T-cell (primary cell): ENCODE measurements at regions of chr6 and their contacts with region 1.

Region 1: GRCh38 chr6:116399287-116399686 is 28.5 kb downstream of the DSE start:
- DNase-seq: no peak
- ATAC-seq: no peak
- H3K4me3 ChIP-seq: no peak overlapping the region
- H3K4me3 Mint-ChIP-seq: no peak overlapping the region
- H3K27ac ChIP-seq: no peak overlapping the region
- H3K27ac Mint-ChIP-seq: no peak overlapping the region
- H3K4me1 ChIP-seq: no peaks in the 10 kb centered on the region
- H3K4me1 Mint-ChIP-seq: peaks cover 0 to 6% (median 2%) of the 10 kb centered on the region in 3 donors
- H3K27me3 ChIP-seq: no peaks in the 10 kb centered on the region
- H3K27me3 Mint-ChIP-seq: no peaks in the 10 kb centered on the region

Region 2: DNA sequence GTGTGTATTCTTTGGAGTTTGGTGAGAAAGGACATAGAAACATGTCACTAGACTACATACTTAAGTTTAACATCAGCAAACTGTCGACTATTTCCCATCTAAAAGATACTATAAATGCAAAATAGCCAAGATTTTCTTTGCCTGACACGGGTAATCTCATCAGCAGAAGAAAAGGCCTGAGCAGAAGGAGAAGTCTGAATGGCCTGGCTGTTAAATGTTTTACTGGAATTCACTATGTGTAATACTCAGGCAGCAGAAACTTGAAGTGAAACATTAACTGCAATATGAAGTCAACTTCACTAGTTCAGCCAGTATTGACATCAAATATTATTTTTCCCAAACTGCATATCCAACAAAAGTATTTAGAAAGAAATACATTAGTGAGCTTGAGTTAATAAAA is 35.0 kb before region 1 on chr6:
- CTCF ChIA-PET with region 1: no interaction called
- POLR2A ChIA-PET with region 1: interaction called in 1 of 2 experiments, 12 read pairs
- DNase-seq: no peak
- ATAC-seq: no peak
- H3K4me3 ChIP-seq: no peak overlapping the region
- H3K4me3 Mint-ChIP-seq: no peak overlapping the region
- H3K27ac ChIP-seq: no peak overlapping the region
- H3K27ac Mint-ChIP-seq: no peak overlapping the region
- H3K4me1 ChIP-seq: no peaks in the 10 kb centered on the region
- H3K4me1 Mint-ChIP-seq: peaks cover under 1 to 5% (median under 1%) of the 10 kb centered on the region in 3 donors
- H3K27me3 ChIP-seq: no peaks in the 10 kb centered on the region
- H3K27me3 Mint-ChIP-seq: peaks cover 0 to 3% of the 10 kb centered on the region in 2 donors

Region 3: DNA sequence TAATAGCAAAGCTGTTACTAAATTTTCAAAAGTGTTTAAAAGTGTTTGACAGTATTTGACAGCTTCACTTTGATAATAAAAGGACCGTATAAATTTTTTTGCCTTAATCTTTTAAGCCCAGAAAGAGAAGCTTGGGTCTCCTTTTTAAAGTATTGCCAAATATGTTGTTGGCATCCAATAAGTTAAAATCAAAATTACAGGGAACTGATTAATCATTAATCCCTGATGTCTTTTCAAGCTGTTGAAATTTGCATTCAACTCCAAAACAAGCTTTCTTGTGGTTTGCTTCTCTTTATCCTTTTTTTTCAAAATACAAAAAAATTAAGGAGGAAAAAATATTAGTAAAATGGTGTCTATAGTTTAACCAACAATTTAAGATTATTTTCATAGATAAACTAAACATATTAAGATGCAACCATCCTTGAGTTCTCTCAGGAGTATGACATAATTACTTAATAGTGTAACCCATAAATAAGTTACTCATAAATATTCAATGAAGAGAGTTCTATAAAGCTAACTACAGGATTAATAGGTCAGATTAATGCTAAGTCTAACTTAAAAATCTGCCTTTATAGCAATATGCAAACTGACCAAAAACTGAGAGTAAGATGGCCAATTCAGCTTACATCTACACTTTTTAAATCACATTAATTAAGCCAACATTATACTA is 34.9 kb after region 1 on chr6:
- CTCF ChIA-PET with region 1: no interaction called
- POLR2A ChIA-PET with region 1: no interaction called
- DNase-seq: no peak
- ATAC-seq: no peak
- H3K4me3 ChIP-seq: no peak overlapping the region
- H3K4me3 Mint-ChIP-seq: no peak overlapping the region
- H3K27ac ChIP-seq: no peak overlapping the region
- H3K27ac Mint-ChIP-seq: no peak overlapping the region
- H3K4me1 ChIP-seq: no peaks in the 10 kb centered on the region
- H3K4me1 Mint-ChIP-seq: no peaks in the 10 kb centered on the region
- H3K27me3 ChIP-seq: no peaks in the 10 kb centered on the region
- H3K27me3 Mint-ChIP-seq: peaks cover 0 to 4% of the 10 kb centered on the region in 2 donors